ENCODE measurements at regions of chr5 and their contacts with region 1.

Region 1: GRCh38 chr5:33440482-33441240 is at the start of gene TARS1:
- DNase-seq: peak; percentile 97 to 99
- H3K4me3 ChIP-seq: peak within 1 kb of the TSS; percentile 78 to 92
- H3K27ac ChIP-seq: peak within 1 kb of the TSS; percentile 91 to 93
- H3K4me1 ChIP-seq: peaks cover 7 to 11% of the 10 kb centered on the region in 2 donors
- H3K27me3 ChIP-seq: no peaks in the 10 kb centered on the region
- CTCF ChIP-seq: no peak
- total RNA-seq, gene TARS1: 60.5 TPM

Region 2: GRCh38 chr5:32444431-32445286 is 996.0 kb before region 1 on chr5 and contains the start of gene ZFR:
- intact Hi-C with region 1: loop called (anchors 2 kb)
- DNase-seq: peak; percentile 61 to 94
- H3K4me3 ChIP-seq: peak within 1 kb of the TSS; percentile 82 to 92
- H3K27ac ChIP-seq: peak within 1 kb of the TSS; percentile 96 to 97
- H3K4me1 ChIP-seq: peaks cover 3 to 21% of the 10 kb centered on the region in 2 donors
- H3K27me3 ChIP-seq: no peaks in the 10 kb centered on the region
- CTCF ChIP-seq: no peak
- total RNA-seq, gene ZFR: 25.8 TPM

Region 3: GRCh38 chr5:33457126-33457525 is 16.5 kb after region 1 on chr5:
- intact Hi-C with region 1: no loop called
- DNase-seq: no peak
- H3K4me3 ChIP-seq: no peak overlapping the region
- H3K27ac ChIP-seq: no peak overlapping the region
- H3K4me1 ChIP-seq: no peaks in the 10 kb centered on the region
- H3K27me3 ChIP-seq: no peaks in the 10 kb centered on the region
- CTCF ChIP-seq: no peak

Region 4: DNA sequence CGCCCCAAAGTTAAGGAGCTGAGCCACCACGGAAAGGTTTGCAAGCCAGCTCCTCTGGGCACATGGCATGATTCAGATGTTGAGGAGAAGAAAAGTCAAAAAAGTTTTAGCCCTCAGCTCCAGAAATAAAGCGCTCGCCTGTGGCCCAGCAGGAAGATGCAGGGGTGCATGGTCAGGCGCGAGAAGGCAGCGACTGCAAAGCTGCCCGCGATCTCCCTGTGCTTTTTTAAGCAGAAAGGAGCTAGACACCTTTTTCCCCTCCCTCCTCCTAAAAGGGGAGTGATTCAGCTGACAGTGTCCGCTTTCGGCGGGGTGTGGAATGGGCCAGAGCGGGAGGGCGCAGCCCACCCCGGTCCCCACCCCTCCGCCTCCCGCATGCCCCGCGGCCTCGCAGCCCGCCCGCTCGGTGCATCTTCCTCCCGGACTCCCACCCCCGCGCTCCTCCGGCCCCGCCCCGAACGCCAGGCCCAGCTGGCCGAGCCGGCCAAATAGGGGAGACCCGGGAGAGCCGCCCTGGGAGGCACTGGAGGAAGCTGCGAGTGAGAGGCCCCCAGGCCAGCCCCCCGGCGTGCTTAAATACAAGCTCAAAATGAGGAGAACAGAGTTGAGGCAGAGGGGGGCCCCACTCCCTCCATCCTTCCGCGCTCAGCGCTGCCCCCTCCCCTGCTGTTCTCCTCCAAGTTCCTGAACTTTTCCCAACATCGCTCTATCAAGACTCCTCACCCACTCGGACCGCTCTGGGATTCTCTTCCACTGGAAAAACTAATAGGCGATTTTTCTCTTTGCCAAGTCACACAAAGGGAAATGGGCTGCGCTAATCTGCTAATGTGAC is 451.3 kb after region 1 on chr5 and contains the start of gene ADAMTS12:
- intact Hi-C with region 1: loop called (anchors 2 kb)
- DNase-seq: no peak
- H3K4me3 ChIP-seq: peak within 1 kb of the TSS; percentile 57 to 75
- H3K27ac ChIP-seq: peak within 1 kb of the TSS; percentile 27 to 67
- H3K4me1 ChIP-seq: peaks cover 0 to 21% of the 10 kb centered on the region in 2 donors
- H3K27me3 ChIP-seq: no peaks in the 10 kb centered on the region
- CTCF ChIP-seq: no peak
- total RNA-seq, gene ADAMTS12: 1.4 TPM

Region 5: DNA sequence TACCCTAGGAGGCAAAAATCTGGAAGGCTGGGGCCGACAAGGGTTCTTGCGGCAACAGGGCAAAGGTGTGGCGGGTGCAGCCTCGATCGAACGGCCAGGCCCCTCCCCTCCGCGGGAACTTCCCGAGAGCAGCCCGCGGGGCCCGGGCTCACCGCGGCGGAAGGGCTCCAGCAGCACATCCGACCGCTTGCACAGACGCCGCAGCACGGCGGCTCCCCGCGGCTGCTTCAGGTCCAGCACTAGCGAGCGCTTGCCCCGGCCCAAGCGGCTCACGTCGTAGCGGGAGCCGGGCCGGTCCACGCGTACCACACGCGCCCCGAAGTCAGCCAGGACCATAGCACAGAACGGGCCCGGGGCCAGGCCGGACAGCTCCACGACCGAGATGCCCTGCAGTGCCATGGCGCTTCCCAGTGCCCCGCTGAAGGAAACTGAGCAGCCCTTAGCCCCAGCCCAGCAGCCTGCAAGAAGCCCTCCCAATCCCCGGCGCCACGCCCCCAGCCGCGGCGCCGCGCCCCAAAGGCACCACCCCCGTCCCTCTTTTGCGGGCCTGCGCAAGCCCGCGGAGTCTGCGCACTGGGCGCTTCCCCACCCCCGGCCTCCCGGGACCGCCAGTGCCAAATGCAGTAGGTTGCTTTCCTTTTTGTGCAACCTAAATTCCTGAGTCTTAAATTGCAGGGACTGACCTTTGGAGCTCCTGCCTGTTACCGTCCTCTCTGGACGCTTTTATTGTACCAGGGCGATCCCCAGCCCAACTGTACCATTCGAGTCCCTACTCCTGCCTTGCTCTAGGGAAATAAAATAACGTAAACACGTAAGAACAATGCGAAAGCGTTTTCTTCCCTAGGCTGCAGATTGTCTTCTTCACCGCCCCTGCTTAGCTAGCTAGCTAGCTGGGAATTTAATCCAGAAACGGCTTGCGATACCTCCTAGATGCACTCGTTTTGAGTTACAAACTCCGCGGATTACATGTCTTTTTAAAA is 567.2 kb after region 1 on chr5 and contains the start of gene AMACR:
- intact Hi-C with region 1: loop called (anchors 5 kb)
- DNase-seq: peak; percentile 66 to 97
- H3K4me3 ChIP-seq: peak within 1 kb of the TSS; percentile 73 to 77
- H3K27ac ChIP-seq: peak within 1 kb of the TSS; percentile 83 to 85
- H3K4me1 ChIP-seq: peaks cover 4 to 11% of the 10 kb centered on the region in 2 donors
- H3K27me3 ChIP-seq: no peaks in the 10 kb centered on the region
- CTCF ChIP-seq: no peak
- total RNA-seq, gene AMACR: 1.3 TPM

Measured in ascending aorta (tissue), 2 donors.